Activated naive CD4-positive, alpha-beta T cell treated with anti-CD3 and anti-CD28 coated beads for 36 hours (primary cell): ENCODE measurements at regions of chr19 and their contacts with region 1.

Region 1: DNA sequence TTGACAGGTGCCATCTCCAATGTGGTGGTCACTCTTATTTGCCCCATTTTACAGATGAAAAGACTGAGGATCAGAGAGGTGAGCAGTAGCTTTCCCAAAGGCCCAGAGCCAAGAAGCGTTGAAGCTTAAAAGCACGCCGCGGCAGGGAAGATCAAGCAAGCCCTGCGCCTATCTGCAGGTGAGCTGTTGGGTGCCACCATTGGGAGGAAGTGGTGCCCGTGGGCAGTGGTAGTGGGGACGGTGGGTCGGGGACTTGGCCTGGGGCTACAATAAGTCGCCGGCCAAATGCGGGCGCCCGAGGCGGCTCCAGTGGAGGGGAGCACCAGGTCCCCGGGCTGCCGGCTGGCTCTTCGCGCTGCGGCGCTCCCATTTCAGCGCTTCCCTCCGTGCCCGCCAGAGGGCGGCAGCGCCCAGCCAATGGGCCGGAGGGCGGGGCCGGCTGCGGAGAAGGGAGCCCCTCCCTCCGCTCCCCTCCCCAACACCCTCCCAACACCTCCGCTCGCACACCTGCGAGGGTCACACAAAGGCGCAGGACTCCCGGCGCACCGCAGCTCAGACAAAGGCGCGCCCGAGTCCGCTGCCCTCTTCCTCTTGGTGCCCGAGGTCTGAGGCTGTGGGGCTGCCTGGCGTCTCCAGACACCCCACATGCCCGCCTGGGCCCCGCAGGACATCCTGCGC is 744 bp upstream of the POU2F2 start:
- DNase-seq: peak; percentile 79
- H3K4me3 Mint-ChIP-seq: peak overlapping the region; percentile 79
- H3K27ac Mint-ChIP-seq: peak overlapping the region; percentile 86
- H3K4me1 Mint-ChIP-seq: peaks cover 58% of the 10 kb centered on the region
- H3K27me3 Mint-ChIP-seq: no peaks in the 10 kb centered on the region

Region 2: GRCh38 chr19:42108527-42109389 is 24.2 kb before region 1 on chr19:
- CTCF ChIA-PET with region 1: interaction called, 86 read pairs
- intact Hi-C with region 1: loop called (anchors 1 kb)
- DNase-seq: peak; percentile 97
- H3K4me3 Mint-ChIP-seq: no peak overlapping the region
- H3K27ac Mint-ChIP-seq: peak overlapping the region; percentile 44
- H3K4me1 Mint-ChIP-seq: peaks cover 55% of the 10 kb centered on the region
- H3K27me3 Mint-ChIP-seq: no peaks in the 10 kb centered on the region

Region 3: DNA sequence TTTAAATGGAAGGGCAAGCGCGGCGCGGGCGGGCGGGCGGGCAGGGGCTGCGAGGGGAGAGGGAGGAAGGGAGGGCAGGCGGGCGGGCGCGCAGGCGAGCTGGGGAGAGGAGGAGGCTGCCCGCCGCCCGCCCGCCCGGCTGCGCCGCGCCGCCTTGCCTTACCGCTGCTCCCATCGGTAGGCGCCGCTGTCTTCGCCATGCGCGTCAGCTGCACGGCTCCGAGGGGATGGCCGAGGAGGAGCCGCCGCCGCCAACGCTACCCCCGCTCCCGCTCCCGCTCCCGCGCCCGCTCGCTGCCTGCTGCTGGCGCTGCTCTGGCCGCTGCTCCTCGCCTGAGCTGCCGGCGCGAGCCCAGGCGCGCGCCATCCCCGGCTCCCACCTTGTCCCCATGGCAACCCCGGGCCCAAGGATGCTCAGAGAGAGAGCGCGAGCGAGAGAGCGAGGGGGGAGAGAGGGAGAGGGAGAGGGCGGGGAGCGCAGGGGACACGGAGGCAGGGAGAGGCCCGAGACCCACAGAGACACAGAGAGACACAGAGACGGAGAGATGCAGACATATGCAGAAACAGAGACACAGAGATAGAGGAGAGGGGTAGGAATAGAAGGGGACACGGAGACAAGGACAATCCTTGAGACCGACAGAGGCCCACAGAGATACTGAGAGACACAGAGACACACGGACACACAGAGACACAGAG is 44.1 kb after region 1 on chr19:
- CTCF ChIA-PET with region 1: interaction called, 35 read pairs
- intact Hi-C with region 1: loop called (anchors 1 kb)
- DNase-seq: peak; percentile 83
- H3K4me3 Mint-ChIP-seq: no peak overlapping the region
- H3K27ac Mint-ChIP-seq: no peak overlapping the region
- H3K4me1 Mint-ChIP-seq: peaks cover 11% of the 10 kb centered on the region
- H3K27me3 Mint-ChIP-seq: peaks cover 26% of the 10 kb centered on the region

Region 4: GRCh38 chr19:42219812-42220750 is 87.1 kb after region 1 on chr19 and contains the start of gene ZNF526:
- CTCF ChIA-PET with region 1: no interaction called
- intact Hi-C with region 1: loop called (anchors 1 kb)
- DNase-seq: peak; percentile 97
- H3K4me3 Mint-ChIP-seq: peak within 1 kb of the TSS; percentile 96
- H3K27ac Mint-ChIP-seq: peak within 1 kb of the TSS; percentile 94
- H3K4me1 Mint-ChIP-seq: peaks cover 55% of the 10 kb centered on the region
- H3K27me3 Mint-ChIP-seq: no peaks in the 10 kb centered on the region
- total RNA-seq, gene ZNF526: 11.5 to 11.6 TPM

Region 5: GRCh38 chr19:42295831-42296525 is 163.0 kb after region 1 on chr19:
- CTCF ChIA-PET with region 1: interaction called, 6 read pairs
- intact Hi-C with region 1: loop called (anchors 1 kb)
- DNase-seq: peak; percentile 95
- H3K4me3 Mint-ChIP-seq: no peak overlapping the region
- H3K27ac Mint-ChIP-seq: no peak overlapping the region
- H3K4me1 Mint-ChIP-seq: peaks cover 4% of the 10 kb centered on the region
- H3K27me3 Mint-ChIP-seq: no peaks in the 10 kb centered on the region

Region 6: DNA sequence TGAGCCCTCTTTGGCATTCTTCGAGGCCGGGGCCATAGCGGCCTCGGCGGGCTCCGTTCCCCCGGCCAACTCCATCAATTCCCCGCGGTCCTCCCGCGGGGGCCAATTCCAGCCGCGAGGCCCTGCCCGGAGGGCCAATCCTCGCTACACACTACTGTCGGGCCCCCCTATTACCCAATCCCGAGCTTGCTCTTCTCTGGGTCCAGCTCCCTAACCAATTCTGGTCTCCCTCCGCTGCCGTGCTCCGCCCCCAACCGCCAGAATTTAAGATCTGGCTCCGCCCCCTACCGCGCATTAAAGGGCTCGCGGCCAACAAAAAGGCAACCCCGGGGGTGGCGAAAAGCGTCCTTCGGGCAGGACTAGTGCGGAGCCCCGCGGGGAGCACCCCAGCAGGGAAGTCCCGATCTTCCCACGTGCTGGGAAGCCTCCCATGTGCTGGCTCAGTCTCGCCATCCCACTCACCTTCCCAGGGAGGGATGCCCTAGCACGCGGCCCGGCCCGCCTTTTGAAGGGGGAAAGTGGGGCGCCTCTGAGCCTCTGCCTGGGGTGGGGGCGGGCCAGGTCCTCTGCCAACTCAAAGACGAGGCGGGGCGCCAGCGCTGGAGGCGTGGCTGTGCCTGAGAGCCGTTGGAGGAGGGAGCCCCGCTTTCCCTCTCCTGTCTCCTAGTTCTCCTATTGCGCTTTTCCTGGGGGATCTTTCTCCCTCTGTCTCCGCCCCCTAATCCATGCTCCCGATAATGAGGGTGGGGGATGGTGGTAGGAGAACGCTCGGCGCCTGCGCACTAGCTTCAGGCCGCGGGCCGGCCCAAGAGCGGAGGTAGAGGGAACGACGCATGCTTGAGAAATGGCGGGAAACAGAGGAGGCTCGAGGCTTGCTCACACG is 290.7 kb after region 1 on chr19:
- CTCF ChIA-PET with region 1: no interaction called
- intact Hi-C with region 1: loop called (anchors 1 kb)
- DNase-seq: peak; percentile 96
- H3K4me3 Mint-ChIP-seq: peak overlapping the region; percentile 93
- H3K27ac Mint-ChIP-seq: peak overlapping the region; percentile 86
- H3K4me1 Mint-ChIP-seq: peaks cover 33% of the 10 kb centered on the region
- H3K27me3 Mint-ChIP-seq: no peaks in the 10 kb centered on the region